CD8-positive, alpha-beta memory T cell (primary cell): ENCODE measurements at regions of chr10 and their contacts with region 1.

Region 1: GRCh38 chr10:63629363-63630084 is 108.3 kb downstream of the REEP3 start:
- DNase-seq: peak; percentile 54 to 83 (median 70)
- H3K4me3 ChIP-seq: peak overlapping the region; percentile 88
- H3K4me3 Mint-ChIP-seq: peak overlapping the region; percentile 88 to 97 (median 93)
- H3K27ac ChIP-seq: peak overlapping the region; percentile 79
- H3K27ac Mint-ChIP-seq: peak overlapping the region; percentile 62 to 91 (median 84)
- H3K4me1 ChIP-seq: peaks cover 10% of the 10 kb centered on the region
- H3K4me1 Mint-ChIP-seq: peaks cover 18 to 31% (median 29%) of the 10 kb centered on the region in 3 donors
- H3K27me3 ChIP-seq: no peaks in the 10 kb centered on the region
- H3K27me3 Mint-ChIP-seq: peaks cover 0 to 1% of the 10 kb centered on the region in 2 donors

Region 2: DNA sequence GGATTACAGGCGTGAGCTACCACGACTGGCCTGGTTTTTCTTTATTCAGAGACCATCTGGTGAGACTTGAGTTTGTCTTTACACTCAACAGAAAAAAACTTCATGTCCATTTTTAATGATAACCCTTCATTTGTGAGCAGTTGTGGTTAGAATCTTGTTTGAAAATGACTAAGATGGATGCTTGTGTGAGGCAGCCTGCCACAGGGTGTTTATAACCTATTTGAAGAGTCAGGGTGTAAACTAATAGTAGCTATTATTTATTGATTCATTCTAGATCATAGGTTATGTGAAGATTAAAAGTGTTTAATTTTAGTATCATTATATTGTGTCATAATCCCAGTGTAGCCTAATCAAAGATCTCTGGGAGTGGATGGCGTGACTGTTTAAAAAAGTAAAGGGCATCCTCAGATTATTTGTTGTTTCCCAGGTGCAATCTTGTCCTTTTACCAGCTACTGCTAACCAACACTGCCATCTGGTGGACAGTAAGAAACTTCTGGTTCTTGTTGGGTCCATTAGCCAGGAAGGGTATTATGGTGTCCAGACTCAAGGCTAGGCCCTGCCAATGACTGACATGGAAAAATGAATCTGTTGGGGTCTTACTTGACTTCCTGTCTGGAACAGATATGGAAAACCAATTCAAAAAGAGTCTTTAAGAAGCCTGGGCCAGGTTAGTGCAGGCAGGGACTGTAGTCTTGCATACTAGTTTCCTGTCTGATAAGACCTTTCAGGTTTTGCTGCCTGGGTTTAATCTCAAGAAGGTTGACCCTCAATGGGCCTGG is 471.5 kb before region 1 on chr10:
- CTCF ChIA-PET with region 1: interaction called, 23 read pairs
- POLR2A ChIA-PET with region 1: interaction called, 3 read pairs
- DNase-seq: peak; percentile 13 to 57 (median 57)
- H3K4me3 ChIP-seq: no peak overlapping the region
- H3K4me3 Mint-ChIP-seq: no peak overlapping the region
- H3K27ac ChIP-seq: no peak overlapping the region
- H3K27ac Mint-ChIP-seq: peak overlapping the region in 1 of 8 donors; percentile 65
- H3K4me1 ChIP-seq: no peaks in the 10 kb centered on the region
- H3K4me1 Mint-ChIP-seq: peaks cover 4 to 18% (median 12%) of the 10 kb centered on the region in 3 donors
- H3K27me3 ChIP-seq: no peaks in the 10 kb centered on the region
- H3K27me3 Mint-ChIP-seq: peaks cover 0 to 1% of the 10 kb centered on the region in 2 donors

Region 3: GRCh38 chr10:63217120-63217605 is 412.4 kb before region 1 on chr10:
- CTCF ChIA-PET with region 1: interaction called, 15 read pairs
- POLR2A ChIA-PET with region 1: interaction called, 3 read pairs
- DNase-seq: peak in 2 of 5 donors; percentile 48 to 58
- H3K4me3 ChIP-seq: no peak overlapping the region
- H3K4me3 Mint-ChIP-seq: peak overlapping the region in 1 of 7 donors; percentile 5
- H3K27ac ChIP-seq: no peak overlapping the region
- H3K27ac Mint-ChIP-seq: peak overlapping the region in 6 of 8 donors; percentile 1 to 85 (median 48)
- H3K4me1 ChIP-seq: peaks cover 27% of the 10 kb centered on the region
- H3K4me1 Mint-ChIP-seq: peaks cover 52 to 61% (median 56%) of the 10 kb centered on the region in 3 donors
- H3K27me3 ChIP-seq: no peaks in the 10 kb centered on the region
- H3K27me3 Mint-ChIP-seq: peaks cover 0 to 2% of the 10 kb centered on the region in 2 donors

Region 4: DNA sequence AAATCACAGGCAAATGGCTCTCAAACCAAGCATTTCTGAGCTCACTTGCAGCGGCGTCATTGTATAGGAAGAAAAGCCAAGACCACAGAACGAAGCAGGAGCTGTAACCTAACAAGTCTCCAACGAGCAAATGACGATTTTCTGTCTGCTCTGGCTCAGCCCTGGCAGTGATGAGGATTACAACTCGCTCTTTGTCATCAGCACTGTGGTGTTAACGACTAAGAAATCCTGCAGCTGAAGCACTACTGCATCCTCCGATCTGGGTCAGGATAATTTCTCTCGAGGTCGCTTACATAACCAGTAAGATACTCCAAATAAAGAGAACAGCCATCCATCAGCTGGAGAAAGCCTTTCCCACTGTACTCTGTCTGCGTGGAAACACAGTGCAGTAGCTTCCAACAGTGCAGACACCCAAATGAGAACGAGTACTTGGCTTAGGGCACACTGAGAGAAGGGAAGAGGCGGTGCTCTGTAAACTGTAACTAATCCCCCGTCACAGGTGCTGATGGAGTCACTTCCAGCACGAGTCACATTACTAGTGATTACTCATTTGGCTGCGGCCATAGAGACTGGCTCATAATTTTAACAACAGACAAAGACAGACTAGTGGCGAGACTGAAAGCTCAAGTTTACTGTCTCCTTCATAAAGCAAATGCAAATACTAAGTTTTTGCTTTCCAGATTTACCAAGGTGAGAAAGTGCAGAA is 360.6 kb before region 1 on chr10:
- CTCF ChIA-PET with region 1: interaction called, 22 read pairs
- POLR2A ChIA-PET with region 1: interaction called, 5 read pairs
- DNase-seq: peak; percentile 63 to 90 (median 87)
- H3K4me3 ChIP-seq: peak overlapping the region; percentile 83
- H3K4me3 Mint-ChIP-seq: peak overlapping the region; percentile 93 to 99 (median 98)
- H3K27ac ChIP-seq: peak overlapping the region; percentile 97
- H3K27ac Mint-ChIP-seq: peak overlapping the region; percentile 97 to 100 (median 99)
- H3K4me1 ChIP-seq: peaks cover 29% of the 10 kb centered on the region
- H3K4me1 Mint-ChIP-seq: peaks cover 20 to 34% (median 28%) of the 10 kb centered on the region in 3 donors
- H3K27me3 ChIP-seq: no peaks in the 10 kb centered on the region
- H3K27me3 Mint-ChIP-seq: no peaks in the 10 kb centered on the region

Region 5: DNA sequence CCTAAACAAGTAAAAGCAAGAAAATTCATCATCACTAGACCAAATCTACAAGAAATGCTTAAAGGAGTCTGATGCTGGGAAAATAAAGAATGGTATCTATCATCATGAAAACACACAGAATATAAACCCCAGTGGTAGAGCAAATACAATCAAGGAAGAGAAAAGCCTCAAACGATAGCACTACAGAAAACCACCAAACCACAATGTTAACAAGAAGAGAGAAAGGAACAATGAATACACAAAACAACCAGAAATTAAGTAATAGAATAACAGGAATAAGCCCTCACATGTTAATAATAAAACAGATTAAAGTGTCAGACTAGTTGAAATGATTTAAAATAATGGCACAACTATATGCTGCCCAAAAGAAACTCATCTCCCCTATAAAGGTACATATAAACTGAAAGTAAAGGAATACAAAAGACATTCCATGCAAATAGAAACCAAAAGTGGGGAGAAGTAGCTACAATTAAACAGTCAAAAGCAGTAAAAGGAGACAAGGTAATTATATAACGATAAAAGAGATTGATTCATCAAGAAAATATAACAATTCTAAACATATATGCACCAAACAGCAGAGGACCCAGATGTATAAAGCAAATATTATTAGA is 241.0 kb before region 1 on chr10:
- CTCF ChIA-PET with region 1: no interaction called
- POLR2A ChIA-PET with region 1: no interaction called
- DNase-seq: peak in 2 of 5 donors; percentile 40 to 45
- H3K4me3 ChIP-seq: peak overlapping the region; percentile 29
- H3K4me3 Mint-ChIP-seq: peak overlapping the region; percentile 16 to 78 (median 71)
- H3K27ac ChIP-seq: no peak overlapping the region
- H3K27ac Mint-ChIP-seq: peak overlapping the region in 7 of 8 donors; percentile 0 to 83 (median 23)
- H3K4me1 ChIP-seq: peaks cover 26% of the 10 kb centered on the region
- H3K4me1 Mint-ChIP-seq: peaks cover 65 to 91% (median 89%) of the 10 kb centered on the region in 3 donors
- H3K27me3 ChIP-seq: no peaks in the 10 kb centered on the region
- H3K27me3 Mint-ChIP-seq: no peaks in the 10 kb centered on the region

Region 6: DNA sequence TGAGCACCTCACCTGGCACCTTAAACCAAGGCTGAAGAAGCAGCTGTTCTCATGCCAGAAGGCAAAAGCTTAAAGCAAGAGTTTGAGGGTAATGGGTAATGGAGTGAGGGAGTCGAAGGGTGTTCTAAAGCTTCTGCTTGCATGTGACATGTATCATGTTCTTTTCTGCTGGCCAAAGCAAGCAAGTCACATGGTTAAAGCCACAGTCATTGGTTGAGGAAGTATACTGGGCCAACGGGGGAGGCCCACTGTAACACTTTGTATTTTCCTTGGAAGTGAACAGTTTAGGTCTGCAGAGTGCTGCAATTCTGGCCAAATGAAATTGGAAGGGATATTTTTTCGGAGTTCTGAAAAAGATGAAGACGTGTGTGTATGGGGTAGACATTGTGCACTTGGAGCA is 32.6 kb before region 1 on chr10:
- CTCF ChIA-PET with region 1: no interaction called
- POLR2A ChIA-PET with region 1: no interaction called
- DNase-seq: no peak
- H3K4me3 ChIP-seq: no peak overlapping the region
- H3K4me3 Mint-ChIP-seq: no peak overlapping the region
- H3K27ac ChIP-seq: no peak overlapping the region
- H3K27ac Mint-ChIP-seq: no peak overlapping the region
- H3K4me1 ChIP-seq: no peaks in the 10 kb centered on the region
- H3K4me1 Mint-ChIP-seq: no peaks in the 10 kb centered on the region
- H3K27me3 ChIP-seq: no peaks in the 10 kb centered on the region
- H3K27me3 Mint-ChIP-seq: no peaks in the 10 kb centered on the region

Region 7: DNA sequence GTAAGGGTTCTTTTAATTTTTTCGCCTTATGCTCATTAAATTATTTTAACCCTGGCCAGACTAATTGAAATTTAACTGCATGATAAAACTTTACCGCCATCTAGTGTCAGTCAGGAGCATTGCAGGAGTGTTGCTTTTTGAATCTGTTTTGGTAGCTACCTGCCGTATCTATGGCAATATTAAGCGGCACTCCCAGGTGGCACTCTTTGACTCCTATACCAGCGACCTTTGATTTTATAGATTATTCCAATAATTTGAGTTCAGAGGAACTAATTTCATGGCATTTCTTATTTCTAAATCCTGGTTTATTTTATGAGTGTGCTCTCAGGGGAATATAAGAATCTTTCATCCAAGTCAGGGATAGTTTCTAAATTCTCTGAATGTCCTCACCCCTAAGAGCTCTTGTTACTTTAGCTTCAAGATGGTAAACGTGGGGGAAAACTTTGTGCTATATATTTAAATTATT is 90.6 kb after region 1 on chr10:
- CTCF ChIA-PET with region 1: interaction called, 18 read pairs
- POLR2A ChIA-PET with region 1: no interaction called
- DNase-seq: peak in 4 of 5 donors; percentile 21 to 61 (median 52)
- H3K4me3 ChIP-seq: no peak overlapping the region
- H3K4me3 Mint-ChIP-seq: peak overlapping the region in 4 of 7 donors; percentile 13 to 39 (median 27)
- H3K27ac ChIP-seq: no peak overlapping the region
- H3K27ac Mint-ChIP-seq: peak overlapping the region in 3 of 8 donors; percentile 17 to 82 (median 64)
- H3K4me1 ChIP-seq: peaks cover 4% of the 10 kb centered on the region
- H3K4me1 Mint-ChIP-seq: peaks cover 7 to 12% (median 11%) of the 10 kb centered on the region in 3 donors
- H3K27me3 ChIP-seq: no peaks in the 10 kb centered on the region
- H3K27me3 Mint-ChIP-seq: peaks cover 5 to 10% of the 10 kb centered on the region in 2 donors